HEK293T (cell line): ENCODE measurements at regions of chr5 and their contacts with region 1.

Region 1: DNA sequence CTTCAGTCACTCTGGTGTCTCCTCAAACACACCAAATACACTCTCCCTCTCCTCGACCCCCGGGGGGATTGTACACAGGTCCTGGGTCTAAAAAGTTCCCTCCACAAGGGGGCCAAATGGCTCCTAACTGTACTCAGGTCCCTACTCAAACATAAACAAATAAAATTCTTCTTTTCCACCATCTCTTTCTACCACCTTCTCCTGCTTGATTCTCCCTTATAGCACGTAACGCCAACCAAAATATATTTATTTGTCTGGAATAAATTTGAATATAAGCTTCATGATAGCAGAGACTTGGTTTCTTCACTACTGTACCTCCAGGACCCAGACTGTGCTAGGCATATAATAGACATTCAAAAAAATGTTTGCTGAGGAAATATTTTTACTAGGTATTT is 21.4 kb downstream of the ZNF608 start:
- DNase-seq: no peak

Region 2: GRCh38 chr5:124692324-124692723 is 32.7 kb before region 1 on chr5:
- CTCF ChIA-PET with region 1: no interaction called
- POLR2A ChIA-PET with region 1: no interaction called
- DNase-seq: no peak

Region 3: DNA sequence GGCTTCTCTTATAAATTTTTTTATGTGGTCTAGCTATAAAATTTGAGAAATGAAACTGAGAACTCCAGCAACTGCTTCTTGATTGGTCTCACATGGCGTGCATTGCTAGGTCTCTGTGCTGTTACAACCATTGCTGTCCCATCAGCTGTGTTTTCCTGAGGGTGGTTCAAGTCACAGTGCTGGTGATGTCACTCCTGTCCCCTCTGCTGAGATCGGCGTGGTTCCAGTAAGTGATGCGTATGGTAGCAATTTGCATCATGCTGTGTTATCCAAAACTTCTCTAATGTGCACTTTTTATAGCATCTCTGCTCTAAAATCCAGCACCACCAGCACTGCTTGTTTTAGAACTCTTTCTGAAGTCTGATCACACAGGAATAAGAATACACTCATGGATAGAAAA is 134.0 kb after region 1 on chr5:
- CTCF ChIA-PET with region 1: no interaction called
- POLR2A ChIA-PET with region 1: no interaction called
- DNase-seq: no peak

Region 4: GRCh38 chr5:124920909-124921666 is 196.1 kb after region 1 on chr5:
- CTCF ChIA-PET with region 1: interaction called, 10 read pairs
- POLR2A ChIA-PET with region 1: no interaction called
- DNase-seq: no peak